ENCODE measurements at regions of chr20 and their contacts with region 1.

Region 1: GRCh38 chr20:38559764-38560163 is 21.2 kb upstream of the ADIG start:
- DNase-seq: peak; percentile 13
- ATAC-seq: peak; percentile 29; the same call in 1 of the 2 replicates
- H3K4me3 ChIP-seq: no peak overlapping the region
- H3K27ac ChIP-seq: no peak overlapping the region
- H3K4me1 ChIP-seq: no peaks in the 10 kb centered on the region
- H3K27me3 ChIP-seq: no peaks in the 10 kb centered on the region
- CTCF ChIP-seq: no peak
- POLR2A ChIP-seq: no peak
- RAD21 ChIP-seq: no peak

Region 2: DNA sequence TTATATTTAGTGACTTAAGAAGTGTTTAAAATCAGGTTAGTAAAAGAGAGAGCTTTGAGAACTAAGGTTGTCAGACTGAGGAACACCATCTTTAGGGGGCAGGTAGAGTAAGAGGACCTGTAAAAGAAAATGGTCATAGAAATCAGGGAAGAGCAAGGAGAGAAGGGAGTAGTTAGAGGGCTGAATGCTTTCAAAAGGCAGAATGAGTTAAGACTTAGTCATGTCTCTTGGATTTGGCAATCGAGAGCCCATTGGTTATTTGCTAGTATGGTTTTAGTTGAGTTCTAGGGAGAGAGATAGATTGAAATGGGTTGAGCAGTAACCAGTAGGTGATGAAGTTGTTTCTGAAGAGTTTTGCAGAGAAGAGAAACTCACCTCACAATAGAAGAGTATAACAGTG is 36.1 kb before region 1 on chr20:
- CTCF ChIA-PET with region 1: no interaction called
- POLR2A ChIA-PET with region 1: no interaction called
- dilution Hi-C with region 1: no loop called
- in situ Hi-C with region 1: no loop called
- intact Hi-C with region 1: loop called (anchors 5 kb)
- DNase-seq: peak; percentile 65
- ATAC-seq: peak; percentile 87
- H3K4me3 ChIP-seq: no peak overlapping the region
- H3K27ac ChIP-seq: no peak overlapping the region
- H3K4me1 ChIP-seq: no peaks in the 10 kb centered on the region; the same call in 1 of the 2 replicates
- H3K27me3 ChIP-seq: no peaks in the 10 kb centered on the region
- CTCF ChIP-seq: no peak
- POLR2A ChIP-seq: no peak
- RAD21 ChIP-seq: no peak

Measured in IMR-90 (cell line).